Heart right ventricle (tissue), 16 donors: ENCODE measurements at regions of chr16 and their contacts with region 1.

Region 1: DNA sequence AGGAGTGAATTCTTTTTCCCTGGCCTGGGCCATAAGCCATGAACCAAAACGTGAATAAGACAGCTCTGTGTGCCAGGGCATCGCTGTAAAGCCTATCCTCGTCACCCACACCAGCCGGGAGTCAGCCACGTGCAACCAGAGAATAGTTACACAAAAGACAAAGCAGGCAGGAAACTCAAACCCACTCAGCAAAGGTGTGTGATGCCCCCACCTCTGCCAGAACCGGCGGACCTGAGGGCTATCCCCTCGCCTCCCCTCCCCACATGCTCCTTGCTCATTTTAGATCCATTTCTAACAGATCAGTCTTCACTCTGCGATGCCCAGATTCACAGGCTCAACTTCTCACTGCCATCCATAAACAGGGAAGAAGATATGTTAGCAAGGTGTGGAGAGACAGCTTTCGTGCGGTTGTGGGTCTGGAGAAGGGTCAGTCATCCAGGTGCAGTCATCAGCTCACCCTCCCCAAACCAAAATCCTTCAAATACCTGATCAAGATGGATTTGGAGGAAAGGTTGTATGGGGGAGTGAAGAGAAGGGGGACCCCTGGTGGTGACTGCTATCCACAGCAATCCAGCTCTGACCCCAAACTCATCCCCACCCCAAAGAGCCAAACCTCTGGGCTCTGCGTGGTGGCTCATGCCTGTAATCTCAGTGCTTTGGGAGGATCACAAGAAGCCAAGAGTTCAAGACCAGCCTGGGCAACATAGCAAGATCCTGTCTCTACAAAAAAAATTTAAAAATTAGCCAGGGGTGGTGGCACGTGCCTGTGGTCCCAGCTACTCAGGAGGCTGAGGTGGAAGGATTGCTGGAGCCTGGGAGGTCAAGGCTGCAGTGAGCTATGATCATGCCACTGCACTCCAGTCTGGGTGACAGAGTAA is 219.2 kb downstream of the C16orf78 start:
- DNase-seq: peak in 1 of 2 donors; percentile 18
- ATAC-seq: peak in 4 of 8 donors; percentile 54 to 62 (median 60)
- H3K4me3 ChIP-seq: no peak overlapping the region
- H3K27ac ChIP-seq: no peak overlapping the region
- H3K4me1 ChIP-seq: peaks cover 0 to 42% (median 20%) of the 10 kb centered on the region in 9 donors
- H3K27me3 ChIP-seq: peaks cover 0 to 5% (median 0%) of the 10 kb centered on the region in 7 donors
- CTCF ChIP-seq: peak; percentile 53 to 82 (median 79)

Region 2: GRCh38 chr16:49556606-49557446 is 36.0 kb before region 1 on chr16:
- intact Hi-C with region 1: loop called in 1 of 10 experiments (anchors 5 kb)
- DNase-seq: no peak
- ATAC-seq: peak in 1 of 8 donors; percentile 28
- H3K4me3 ChIP-seq: no peak overlapping the region
- H3K27ac ChIP-seq: no peak overlapping the region
- H3K4me1 ChIP-seq: peaks cover 0 to 15% (median 6%) of the 10 kb centered on the region in 9 donors
- H3K27me3 ChIP-seq: no peaks in the 10 kb centered on the region
- CTCF ChIP-seq: peak; percentile 18 to 60 (median 50)